Posterior cingulate gyrus (tissue), 11 donors: ENCODE measurements at regions of chr12 and their contacts with region 1.

Region 1: DNA sequence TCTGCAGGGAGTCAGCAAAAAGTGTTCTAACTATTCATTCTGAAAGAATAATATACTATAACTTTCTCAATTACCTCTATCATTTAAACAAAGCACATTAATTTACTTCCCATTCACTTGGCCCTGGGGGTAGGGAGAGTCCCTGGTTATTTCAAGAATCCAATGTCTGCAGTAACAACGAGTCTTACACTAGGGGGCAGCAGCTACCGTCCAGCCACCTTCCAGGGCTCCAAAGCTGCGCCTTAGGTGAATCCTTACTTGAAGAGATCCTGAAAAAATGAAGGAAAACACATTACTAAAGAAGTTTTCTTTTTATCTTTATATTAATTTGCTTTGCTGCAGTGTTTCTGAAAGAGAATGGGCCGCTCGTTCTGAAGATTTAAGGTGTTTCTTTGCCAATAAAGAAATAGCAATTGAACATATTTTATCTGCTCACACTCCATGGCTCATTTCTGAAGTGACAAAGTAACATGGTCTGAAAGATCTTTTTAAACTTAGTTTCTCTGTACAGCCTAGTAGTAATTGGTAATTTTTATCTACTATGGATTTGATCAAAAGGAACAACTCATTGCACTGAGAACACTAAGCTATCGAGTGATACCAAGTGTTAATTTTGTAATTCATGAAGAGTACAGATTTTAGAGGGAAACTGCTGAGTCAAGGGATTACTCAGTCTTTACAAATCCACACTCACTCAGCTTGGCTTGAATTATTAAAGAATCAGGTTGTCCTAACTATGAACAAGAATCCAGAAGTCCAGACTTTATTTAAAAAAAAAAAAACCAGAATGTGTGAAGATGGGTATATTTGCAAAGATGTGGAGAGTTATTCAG is 27.6 kb downstream of the BHLHE41 start:
- DNase-seq: peak; percentile 36 to 96 (median 76)

Region 2: GRCh38 chr12:26378711-26379110 is 281.4 kb after region 1 on chr12:
- intact Hi-C with region 1: loop called (anchors 10 kb)
- DNase-seq: no peak

Region 3: GRCh38 chr12:26651566-26652188 is 554.4 kb after region 1 on chr12:
- intact Hi-C with region 1: loop called (anchors 5 kb)
- DNase-seq: peak in 5 of 10 donors; percentile 35 to 74 (median 59)

Region 4: GRCh38 chr12:26701604-26702215 is 604.4 kb after region 1 on chr12:
- intact Hi-C with region 1: loop called (anchors 5 kb)
- DNase-seq: no peak